Activated CD4-positive, alpha-beta T cell treated with anti-CD3 and anti-CD28 coated beads for 36 hours (primary cell): ENCODE measurements at regions of chr2 and their contacts with region 1.

Region 1: GRCh38 chr2:96164459-96165184 is 19.4 kb upstream of the DUSP2 start:
- DNase-seq: peak; percentile 88
- ATAC-seq: peak; percentile 85
- H3K4me3 Mint-ChIP-seq: peak overlapping the region; percentile 82
- H3K27ac Mint-ChIP-seq: peak overlapping the region; percentile 100
- H3K4me1 Mint-ChIP-seq: peaks cover 80% of the 10 kb centered on the region
- H3K27me3 Mint-ChIP-seq: no peaks in the 10 kb centered on the region

Region 2: GRCh38 chr2:96152301-96153165 is 12.1 kb before region 1 on chr2:
- CTCF ChIA-PET with region 1: interaction called, 18 read pairs
- POLR2A ChIA-PET with region 1: interaction called, 119 read pairs
- intact Hi-C with region 1: loop called in 1 of 2 experiments (anchors 1 kb)
- DNase-seq: peak; percentile 32
- ATAC-seq: no peak
- H3K4me3 Mint-ChIP-seq: no peak overlapping the region
- H3K27ac Mint-ChIP-seq: peak overlapping the region; percentile 70
- H3K4me1 Mint-ChIP-seq: peaks cover 93% of the 10 kb centered on the region
- H3K27me3 Mint-ChIP-seq: no peaks in the 10 kb centered on the region